ENCODE measurements at regions of chr2 and their contacts with region 1.

Region 1: GRCh38 chr2:204072443-204073324 is 136.1 kb downstream of the ICOS start:
- DNase-seq: peak; percentile 88
- ATAC-seq: peak; percentile 89
- H3K4me3 Mint-ChIP-seq: no peak overlapping the region
- H3K27ac Mint-ChIP-seq: no peak overlapping the region
- H3K4me1 Mint-ChIP-seq: peaks cover 7% of the 10 kb centered on the region
- H3K27me3 Mint-ChIP-seq: peaks cover 5% of the 10 kb centered on the region

Region 2: GRCh38 chr2:203909261-203909967 is 163.3 kb before region 1 on chr2:
- CTCF ChIA-PET with region 1: no interaction called
- POLR2A ChIA-PET with region 1: no interaction called
- intact Hi-C with region 1: no loop called
- DNase-seq: peak; percentile 44
- ATAC-seq: peak; percentile 72
- H3K4me3 Mint-ChIP-seq: peak overlapping the region; percentile 0
- H3K27ac Mint-ChIP-seq: peak overlapping the region; percentile 44
- H3K4me1 Mint-ChIP-seq: peaks cover 30% of the 10 kb centered on the region
- H3K27me3 Mint-ChIP-seq: peaks cover 2% of the 10 kb centered on the region

Region 3: DNA sequence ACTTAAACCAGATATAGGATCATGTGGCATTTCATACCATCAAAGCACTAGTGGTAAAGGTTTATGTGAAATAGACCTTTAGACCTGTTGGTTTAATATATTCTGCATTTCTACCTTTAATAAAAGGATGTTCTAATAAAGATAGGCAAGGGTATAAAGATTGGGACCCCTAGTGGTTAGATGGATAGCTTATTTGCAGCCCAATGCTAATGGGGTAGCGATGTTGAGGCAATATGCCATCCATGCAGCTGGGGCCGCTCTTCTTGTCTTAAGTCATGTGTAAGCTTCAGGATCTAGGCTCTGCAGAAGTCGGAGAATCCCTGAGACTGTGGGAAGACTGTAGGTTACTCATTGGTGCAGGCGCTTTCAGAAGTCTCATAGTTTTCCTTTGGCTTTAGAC is 21.2 kb before region 1 on chr2:
- CTCF ChIA-PET with region 1: interaction called, 12 read pairs
- POLR2A ChIA-PET with region 1: no interaction called
- intact Hi-C with region 1: no loop called
- DNase-seq: no peak
- ATAC-seq: no peak
- H3K4me3 Mint-ChIP-seq: no peak overlapping the region
- H3K27ac Mint-ChIP-seq: no peak overlapping the region
- H3K4me1 Mint-ChIP-seq: peaks cover 15% of the 10 kb centered on the region
- H3K27me3 Mint-ChIP-seq: no peaks in the 10 kb centered on the region

Region 4: DNA sequence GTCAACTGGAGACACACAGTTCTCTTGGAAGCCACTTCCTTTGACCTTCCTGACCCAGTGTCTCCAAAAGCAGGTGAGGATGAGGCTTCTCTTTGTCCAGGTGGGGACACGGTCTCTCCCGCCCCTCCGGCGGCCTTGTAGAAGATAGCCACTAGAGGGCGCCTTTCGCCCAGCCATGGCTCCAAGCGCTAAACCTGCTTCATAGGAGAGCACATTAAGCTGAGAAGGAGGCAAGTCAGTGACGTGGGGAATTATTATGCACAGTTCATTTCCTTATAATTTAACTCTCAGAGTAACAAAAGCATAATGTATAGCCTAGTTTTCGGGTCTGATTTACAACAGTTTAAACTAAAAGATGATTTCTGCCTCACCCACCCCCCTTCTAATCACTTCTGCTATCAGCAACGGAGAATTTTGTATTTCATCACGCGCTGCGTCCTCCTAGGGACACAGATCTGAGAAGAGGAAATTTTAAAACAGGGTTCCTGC is 72.6 kb after region 1 on chr2:
- CTCF ChIA-PET with region 1: interaction called, 7 read pairs
- POLR2A ChIA-PET with region 1: no interaction called
- intact Hi-C with region 1: loop called in 1 of 2 experiments (anchors 1 kb)
- DNase-seq: peak; percentile 89
- ATAC-seq: peak; percentile 97
- H3K4me3 Mint-ChIP-seq: peak overlapping the region; percentile 65
- H3K27ac Mint-ChIP-seq: peak overlapping the region; percentile 68
- H3K4me1 Mint-ChIP-seq: peaks cover 10% of the 10 kb centered on the region
- H3K27me3 Mint-ChIP-seq: peaks cover 13% of the 10 kb centered on the region

Region 5: GRCh38 chr2:204691911-204692510 is 619.3 kb after region 1 on chr2:
- CTCF ChIA-PET with region 1: interaction called, 3 read pairs
- POLR2A ChIA-PET with region 1: no interaction called
- intact Hi-C with region 1: loop called in 1 of 2 experiments (anchors 1 kb)
- DNase-seq: peak; percentile 24
- ATAC-seq: peak; percentile 36
- H3K4me3 Mint-ChIP-seq: no peak overlapping the region
- H3K27ac Mint-ChIP-seq: no peak overlapping the region
- H3K4me1 Mint-ChIP-seq: peaks cover 10% of the 10 kb centered on the region
- H3K27me3 Mint-ChIP-seq: no peaks in the 10 kb centered on the region

Measured in activated CD4-positive, alpha-beta T cell treated with anti-CD3 and anti-CD28 coated beads for 36 hours (primary cell).